Activated naive CD4-positive, alpha-beta T cell treated with anti-CD3 and anti-CD28 coated beads for 36 hours (primary cell): ENCODE measurements at regions of chr10 and their contacts with region 1.

Region 1: GRCh38 chr10:93695740-93696139 is 6.7 kb downstream of the FRA10AC1 start:
- DNase-seq: no peak
- H3K4me3 Mint-ChIP-seq: no peak overlapping the region
- H3K27ac Mint-ChIP-seq: no peak overlapping the region
- H3K4me1 Mint-ChIP-seq: peaks cover 10% of the 10 kb centered on the region
- H3K27me3 Mint-ChIP-seq: no peaks in the 10 kb centered on the region

Region 2: DNA sequence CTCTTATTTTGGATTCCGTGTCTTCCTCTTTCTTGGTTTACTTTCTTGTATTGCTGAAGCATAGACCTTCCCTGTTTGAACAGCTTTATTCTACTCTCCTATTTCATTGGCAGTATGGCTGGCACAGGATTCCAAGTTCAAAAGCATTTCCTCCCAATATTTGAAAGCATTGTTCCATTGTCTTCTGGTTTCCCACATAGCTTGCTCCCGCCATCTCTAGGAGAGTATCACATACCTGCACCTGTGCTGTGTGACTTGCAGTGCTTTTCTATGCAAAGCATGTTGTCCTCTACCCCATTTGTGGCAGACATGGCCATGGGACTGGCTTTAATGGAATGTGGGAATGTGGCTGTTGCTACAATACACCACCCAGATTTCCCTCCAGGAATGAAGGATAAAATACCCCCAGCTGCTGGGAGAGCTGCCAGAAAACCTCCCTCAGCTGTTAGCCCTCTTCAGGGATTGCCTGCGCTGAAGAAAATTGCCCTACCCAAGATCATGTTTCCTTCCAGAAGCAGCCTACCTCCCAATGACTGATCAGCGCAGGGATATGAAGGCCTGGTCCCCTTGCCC is 206.7 kb before region 1 on chr10:
- CTCF ChIA-PET with region 1: no interaction called
- intact Hi-C with region 1: loop called (anchors 1 kb)
- DNase-seq: no peak
- H3K4me3 Mint-ChIP-seq: no peak overlapping the region
- H3K27ac Mint-ChIP-seq: no peak overlapping the region
- H3K4me1 Mint-ChIP-seq: no peaks in the 10 kb centered on the region
- H3K27me3 Mint-ChIP-seq: peaks cover 18% of the 10 kb centered on the region